ENCODE measurements at regions of chr12 and their contacts with region 1.

Region 1: GRCh38 chr12:91178139-91178561 is 4.5 kb downstream of the DCN start:
- DNase-seq: no peak
- ATAC-seq: peak; percentile 72
- H3K4me3 ChIP-seq: peak overlapping the region; percentile 42
- H3K27ac ChIP-seq: peak overlapping the region; percentile 76
- H3K4me1 ChIP-seq: no peaks in the 10 kb centered on the region
- H3K27me3 ChIP-seq: no peaks in the 10 kb centered on the region
- CTCF ChIP-seq: peak; percentile 58

Region 2: DNA sequence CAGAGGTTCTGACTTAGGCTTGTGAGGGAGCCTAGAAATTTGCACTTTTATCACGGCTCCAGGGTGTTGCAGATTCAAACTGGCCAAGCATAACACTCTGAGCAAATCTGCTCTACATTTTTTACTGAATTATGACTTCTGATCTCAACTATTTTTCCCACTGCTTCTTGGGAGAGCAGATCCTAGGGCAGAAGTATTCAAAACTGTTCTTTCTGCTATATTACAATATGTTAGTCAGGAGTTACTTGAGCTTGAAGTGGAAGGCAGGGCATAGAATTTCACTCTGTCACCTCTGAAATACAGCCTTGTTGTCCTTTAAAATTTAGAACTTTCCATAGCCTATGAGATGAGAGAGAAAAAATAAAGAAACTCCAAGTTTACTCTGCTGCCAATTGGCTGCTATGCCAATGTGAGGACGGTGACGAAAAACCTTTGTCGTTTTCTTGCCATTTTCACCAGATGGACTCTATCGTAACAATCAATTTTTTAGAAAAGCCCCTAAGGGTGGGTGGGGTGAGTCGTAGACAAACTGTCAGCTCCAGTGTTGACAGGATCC is 103.9 kb before region 1 on chr12:
- intact Hi-C with region 1: no loop called
- DNase-seq: no peak
- ATAC-seq: no peak
- H3K4me3 ChIP-seq: no peak overlapping the region
- H3K27ac ChIP-seq: no peak overlapping the region
- H3K4me1 ChIP-seq: no peaks in the 10 kb centered on the region
- H3K27me3 ChIP-seq: no peaks in the 10 kb centered on the region
- CTCF ChIP-seq: no peak

Region 3: GRCh38 chr12:91355150-91356006 is 177.2 kb after region 1 on chr12:
- intact Hi-C with region 1: loop called (anchors 10 kb)
- DNase-seq: peak; percentile 66
- ATAC-seq: peak; percentile 95
- H3K4me3 ChIP-seq: no peak overlapping the region
- H3K27ac ChIP-seq: no peak overlapping the region
- H3K4me1 ChIP-seq: no peaks in the 10 kb centered on the region
- H3K27me3 ChIP-seq: no peaks in the 10 kb centered on the region
- CTCF ChIP-seq: peak; percentile 82

Measured in upper lobe of right lung (tissue), 1 donor.